H1 (cell line): ENCODE measurements at regions of chr5 and their contacts with region 1.

Region 1: GRCh38 chr5:137320056-137321045 is 178.8 kb downstream of the SPOCK1 start:
- DNase-seq: peak in 1 of 2 experiments; percentile 71
- H3K4me3 ChIP-seq: no peak overlapping the region
- H3K27ac ChIP-seq: no peak overlapping the region
- H3K4me1 ChIP-seq: peaks cover 0 to 4% (median 0%) of the 10 kb centered on the region in 4 experiments; a peak in 2 of 7 replicates
- H3K27me3 ChIP-seq: no peaks in the 10 kb centered on the region
- CTCF ChIP-seq: peak in 2 of 3 experiments; percentile 69 to 77; a peak in 3 of 4 replicates
- EP300 ChIP-seq: no peak
- POLR2A ChIP-seq: no peak
- RAD21 ChIP-seq: peak; percentile 74 to 84

Region 2: DNA sequence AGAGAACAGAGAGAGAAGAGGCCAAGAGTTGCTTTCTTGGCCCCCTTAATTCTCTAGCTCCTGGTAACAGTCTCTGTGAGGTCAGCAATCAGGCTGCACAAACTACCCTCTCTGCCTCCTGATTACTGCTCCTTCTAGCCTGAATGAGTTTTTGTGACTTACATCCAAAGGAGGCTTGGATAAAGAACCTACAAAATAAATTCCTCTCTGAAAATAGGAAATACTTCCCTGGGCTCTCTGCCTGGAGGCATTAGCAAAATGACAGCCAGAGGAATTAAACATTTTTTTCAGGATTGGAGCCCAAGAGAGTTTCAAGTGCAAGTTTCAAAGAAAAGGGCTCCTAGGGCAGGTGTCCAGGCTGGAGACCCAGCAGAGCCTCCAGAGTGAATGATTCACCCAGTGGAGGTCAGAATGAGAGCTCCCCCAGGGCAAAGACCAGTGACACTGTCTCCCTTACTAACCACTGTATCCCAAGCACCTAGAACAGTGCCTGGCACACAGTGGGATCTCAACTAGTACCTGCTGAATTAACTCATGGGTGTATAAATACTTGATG is 16.3 kb after region 1 on chr5:
- CTCF ChIA-PET with region 1: interaction called, 18 read pairs
- POLR2A ChIA-PET with region 1: no interaction called
- DNase-seq: no peak
- H3K4me3 ChIP-seq: no peak overlapping the region
- H3K27ac ChIP-seq: no peak overlapping the region
- H3K4me1 ChIP-seq: no peaks in the 10 kb centered on the region
- H3K27me3 ChIP-seq: no peaks in the 10 kb centered on the region
- CTCF ChIP-seq: no peak
- EP300 ChIP-seq: no peak
- POLR2A ChIP-seq: no peak
- RAD21 ChIP-seq: no peak

Region 3: GRCh38 chr5:137365126-137365865 is 44.9 kb after region 1 on chr5:
- CTCF ChIA-PET with region 1: interaction called, 11 read pairs
- POLR2A ChIA-PET with region 1: no interaction called
- DNase-seq: no peak
- H3K4me3 ChIP-seq: no peak overlapping the region
- H3K27ac ChIP-seq: no peak overlapping the region
- H3K4me1 ChIP-seq: no peaks in the 10 kb centered on the region
- H3K27me3 ChIP-seq: no peaks in the 10 kb centered on the region
- CTCF ChIP-seq: no peak
- EP300 ChIP-seq: no peak
- POLR2A ChIP-seq: no peak
- RAD21 ChIP-seq: no peak

Region 4: DNA sequence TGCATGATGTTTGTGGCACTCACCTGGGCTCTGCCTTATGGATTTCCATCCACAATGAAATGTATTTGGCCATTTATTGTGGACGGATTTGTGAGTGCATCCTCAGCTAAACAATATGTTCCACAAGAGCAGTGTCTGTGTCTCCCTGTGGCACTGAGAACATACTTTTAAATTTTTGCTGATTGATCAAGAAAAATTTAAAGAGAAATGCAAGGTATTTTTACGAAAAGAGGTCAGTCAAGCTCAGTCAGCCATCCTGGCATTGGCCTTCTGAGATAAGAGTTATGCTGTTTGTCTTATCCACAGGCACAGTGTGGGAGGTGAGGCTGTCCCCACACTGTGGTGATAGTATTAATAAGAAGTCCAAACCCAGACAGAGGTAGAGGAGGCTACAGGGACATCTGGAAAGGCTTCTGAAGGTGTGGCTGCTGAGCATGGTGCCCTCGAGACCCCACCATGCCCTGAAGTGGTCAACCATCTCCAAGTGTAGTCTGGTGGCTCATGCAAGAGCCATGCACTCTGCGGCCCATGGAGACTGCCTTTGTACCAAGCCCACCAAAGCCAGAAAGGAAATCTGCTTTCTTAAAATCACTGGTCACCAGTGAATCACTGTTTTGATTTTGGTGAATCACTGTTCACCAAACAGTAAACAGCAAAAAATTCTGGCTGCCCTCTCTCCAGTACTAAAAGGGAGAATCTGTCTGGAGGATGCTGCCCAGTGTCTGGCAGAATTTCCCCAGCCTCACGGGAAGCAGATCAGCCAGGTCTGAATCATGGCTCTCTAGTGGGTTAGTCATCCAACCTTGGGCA is 150.0 kb after region 1 on chr5:
- CTCF ChIA-PET with region 1: interaction called, 10 read pairs
- POLR2A ChIA-PET with region 1: no interaction called
- DNase-seq: no peak
- H3K4me3 ChIP-seq: no peak overlapping the region
- H3K27ac ChIP-seq: no peak overlapping the region
- H3K4me1 ChIP-seq: no peaks in the 10 kb centered on the region
- H3K27me3 ChIP-seq: no peaks in the 10 kb centered on the region
- CTCF ChIP-seq: no peak
- EP300 ChIP-seq: no peak
- POLR2A ChIP-seq: no peak
- RAD21 ChIP-seq: no peak

Region 5: GRCh38 chr5:137491121-137491520 is 170.8 kb after region 1 on chr5:
- CTCF ChIA-PET with region 1: interaction called, 47 read pairs
- POLR2A ChIA-PET with region 1: no interaction called
- DNase-seq: no peak
- H3K4me3 ChIP-seq: no peak overlapping the region
- H3K27ac ChIP-seq: no peak overlapping the region
- H3K4me1 ChIP-seq: no peaks in the 10 kb centered on the region
- H3K27me3 ChIP-seq: no peaks in the 10 kb centered on the region; a peak in 1 of 7 replicates
- CTCF ChIP-seq: no peak
- EP300 ChIP-seq: no peak
- POLR2A ChIP-seq: no peak
- RAD21 ChIP-seq: no peak